Caco-2 (cell line): ENCODE measurements at regions of chr19 and their contacts with region 1.

Region 1: GRCh38 chr19:50777754-50778303 is 7.6 kb downstream of the GPR32 start:
- DNase-seq: no peak
- H3K4me3 ChIP-seq: no peak overlapping the region
- H3K4me3 Mint-ChIP-seq: no peak overlapping the region
- H3K27ac Mint-ChIP-seq: no peak overlapping the region
- H3K4me1 ChIP-seq: peaks cover 7% of the 10 kb centered on the region; the same call in 1 of the 2 replicates
- H3K4me1 Mint-ChIP-seq: no peaks in the 10 kb centered on the region
- H3K27me3 ChIP-seq: no peaks in the 10 kb centered on the region
- H3K27me3 Mint-ChIP-seq: peaks cover 30% of the 10 kb centered on the region
- CTCF ChIP-seq: no peak

Region 2: DNA sequence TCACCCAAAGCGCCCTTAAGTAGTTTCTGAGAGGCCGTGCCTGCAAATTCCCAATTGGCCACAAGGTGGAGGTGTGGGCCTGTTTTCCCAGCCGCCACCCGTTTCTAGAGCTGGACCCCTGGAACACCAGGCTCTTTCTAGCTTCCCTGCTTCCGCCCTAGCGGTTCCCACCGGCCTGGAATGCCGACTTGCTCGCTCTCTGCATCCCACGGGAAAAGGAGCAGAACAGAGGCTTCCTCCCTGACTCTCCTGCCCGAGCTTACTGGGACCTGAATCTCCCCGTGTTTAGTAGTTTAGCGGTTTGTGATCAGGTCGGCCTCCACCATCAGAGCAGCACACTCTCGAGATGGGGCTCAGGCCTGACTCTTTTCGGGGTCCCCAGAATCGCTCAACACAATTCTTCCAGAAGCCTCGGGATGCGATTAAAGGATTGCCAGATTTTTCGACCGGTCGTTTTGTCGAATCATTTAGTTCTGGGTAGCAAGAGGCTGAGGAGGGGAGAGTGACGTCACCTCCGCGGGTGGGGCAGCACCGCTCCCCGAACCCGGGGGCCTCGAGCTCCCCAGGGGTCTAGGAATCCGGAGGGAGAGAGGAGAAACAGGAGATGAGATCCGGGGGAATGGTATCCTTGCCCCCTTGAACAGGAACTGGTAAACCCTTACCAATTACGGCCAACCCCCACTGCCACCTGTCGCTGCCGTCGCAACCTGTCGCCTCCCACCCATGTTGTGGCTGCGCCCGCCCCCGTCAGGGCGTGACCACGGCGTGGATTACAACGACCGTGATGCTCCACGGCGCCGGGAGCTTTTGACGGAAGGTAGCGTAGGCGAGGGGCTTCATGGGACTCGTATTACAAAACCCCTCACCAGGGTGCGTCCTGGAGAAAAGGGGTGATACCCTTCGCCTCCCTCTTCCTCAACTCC is 420.4 kb before region 1 on chr19:
- CTCF ChIA-PET with region 1: no interaction called
- POLR2A ChIA-PET with region 1: no interaction called
- intact Hi-C with region 1: loop called (anchors 2 kb)
- DNase-seq: peak; percentile 71 to 82
- H3K4me3 ChIP-seq: peak overlapping the region; percentile 36
- H3K4me3 Mint-ChIP-seq: peak overlapping the region; percentile 68
- H3K27ac Mint-ChIP-seq: no peak overlapping the region
- H3K4me1 ChIP-seq: no peaks in the 10 kb centered on the region
- H3K4me1 Mint-ChIP-seq: no peaks in the 10 kb centered on the region
- H3K27me3 ChIP-seq: no peaks in the 10 kb centered on the region
- H3K27me3 Mint-ChIP-seq: no peaks in the 10 kb centered on the region
- CTCF ChIP-seq: peak; percentile 83 to 94

Region 3: GRCh38 chr19:50537762-50538230 is 240.0 kb before region 1 on chr19:
- CTCF ChIA-PET with region 1: no interaction called
- POLR2A ChIA-PET with region 1: no interaction called
- intact Hi-C with region 1: loop called (anchors 1 kb)
- DNase-seq: peak; percentile 88 to 89
- H3K4me3 ChIP-seq: no peak overlapping the region
- H3K4me3 Mint-ChIP-seq: no peak overlapping the region
- H3K27ac Mint-ChIP-seq: no peak overlapping the region
- H3K4me1 ChIP-seq: no peaks in the 10 kb centered on the region
- H3K4me1 Mint-ChIP-seq: no peaks in the 10 kb centered on the region
- H3K27me3 ChIP-seq: no peaks in the 10 kb centered on the region
- H3K27me3 Mint-ChIP-seq: no peaks in the 10 kb centered on the region
- CTCF ChIP-seq: peak; percentile 84 to 87

Region 4: GRCh38 chr19:50724522-50725217 is 53.2 kb before region 1 on chr19:
- CTCF ChIA-PET with region 1: no interaction called
- POLR2A ChIA-PET with region 1: no interaction called
- intact Hi-C with region 1: loop called (anchors 5 kb)
- DNase-seq: peak; percentile 95 to 97
- H3K4me3 ChIP-seq: peak overlapping the region; percentile 68
- H3K4me3 Mint-ChIP-seq: peak overlapping the region; percentile 76
- H3K27ac Mint-ChIP-seq: peak overlapping the region; percentile 61
- H3K4me1 ChIP-seq: no peaks in the 10 kb centered on the region
- H3K4me1 Mint-ChIP-seq: peaks cover 10% of the 10 kb centered on the region
- H3K27me3 ChIP-seq: no peaks in the 10 kb centered on the region
- H3K27me3 Mint-ChIP-seq: peaks cover 20% of the 10 kb centered on the region
- CTCF ChIP-seq: peak; percentile 52 to 78

Region 5: DNA sequence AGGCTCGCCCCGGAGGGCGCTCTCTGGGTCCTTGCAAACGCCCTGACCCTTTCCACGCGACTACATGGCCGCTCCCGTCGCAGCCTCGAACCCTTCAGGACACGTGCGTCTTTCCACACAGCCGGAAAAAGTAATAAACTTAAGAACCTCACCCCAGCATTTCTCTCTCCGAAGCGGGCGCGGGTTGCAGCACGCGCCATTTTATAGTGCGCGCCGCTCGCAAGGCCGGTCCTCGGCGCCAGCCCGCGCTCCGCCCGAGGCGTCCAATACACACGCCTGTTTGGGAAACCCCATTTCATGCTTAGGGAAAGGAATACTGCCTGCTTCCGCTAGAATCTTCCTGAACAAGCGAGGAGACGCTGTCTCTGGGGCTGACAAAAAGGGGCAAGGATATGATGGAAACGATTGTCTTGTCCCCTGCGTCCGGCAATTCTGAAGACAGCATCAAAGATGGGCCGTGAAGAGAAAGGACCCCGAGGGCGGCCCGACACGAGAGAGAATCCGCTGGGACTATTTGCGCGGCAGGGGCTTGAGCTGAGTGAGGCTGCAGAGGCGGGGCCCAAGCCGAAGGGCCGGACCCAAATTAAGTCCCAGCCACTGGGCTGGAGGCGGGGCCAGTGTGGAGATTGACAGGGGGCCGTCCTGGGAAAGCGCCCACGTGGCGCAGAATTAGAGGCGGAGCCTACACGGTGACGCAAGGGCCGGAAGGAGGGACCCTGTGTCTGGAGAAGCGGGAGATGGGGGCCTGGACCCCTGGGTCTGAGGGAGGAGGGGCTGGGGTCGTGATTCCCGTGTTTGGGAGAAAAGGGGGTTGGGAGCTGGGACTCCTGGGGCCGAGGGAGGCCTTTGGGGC is 26.8 kb after region 1 on chr19:
- CTCF ChIA-PET with region 1: no interaction called
- POLR2A ChIA-PET with region 1: no interaction called
- intact Hi-C with region 1: no loop called
- DNase-seq: peak; percentile 99
- H3K4me3 ChIP-seq: peak overlapping the region; percentile 62
- H3K4me3 Mint-ChIP-seq: peak overlapping the region; percentile 93
- H3K27ac Mint-ChIP-seq: peak overlapping the region; percentile 99
- H3K4me1 ChIP-seq: peaks cover 10% of the 10 kb centered on the region; the same call in 1 of the 2 replicates
- H3K4me1 Mint-ChIP-seq: peaks cover 12% of the 10 kb centered on the region
- H3K27me3 ChIP-seq: no peaks in the 10 kb centered on the region
- H3K27me3 Mint-ChIP-seq: no peaks in the 10 kb centered on the region
- CTCF ChIP-seq: no peak

Region 6: DNA sequence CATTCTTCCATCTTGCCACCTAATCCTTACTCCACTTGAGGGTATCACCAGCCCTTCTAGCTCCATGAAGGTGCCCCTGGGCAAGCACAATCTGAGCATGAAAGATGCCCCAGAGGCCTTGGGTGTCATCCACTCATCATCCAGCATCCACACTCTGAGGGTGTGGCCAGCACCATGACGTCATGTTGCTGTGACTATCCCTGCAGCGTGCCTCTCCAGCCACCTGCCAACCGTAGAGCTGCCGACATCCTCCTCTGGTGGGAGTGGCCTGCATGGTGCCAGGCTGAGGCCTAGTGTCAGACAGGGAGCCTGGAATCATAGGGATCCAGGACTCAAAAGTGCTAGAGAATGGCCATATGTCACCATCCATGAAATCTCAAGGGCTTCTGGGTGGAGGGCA is 73.8 kb after region 1 on chr19:
- CTCF ChIA-PET with region 1: no interaction called
- POLR2A ChIA-PET with region 1: no interaction called
- intact Hi-C with region 1: no loop called
- DNase-seq: peak in 1 of 2 experiments; percentile 17
- H3K4me3 ChIP-seq: no peak overlapping the region
- H3K4me3 Mint-ChIP-seq: no peak overlapping the region
- H3K27ac Mint-ChIP-seq: no peak overlapping the region
- H3K4me1 ChIP-seq: no peaks in the 10 kb centered on the region
- H3K4me1 Mint-ChIP-seq: no peaks in the 10 kb centered on the region
- H3K27me3 ChIP-seq: no peaks in the 10 kb centered on the region
- H3K27me3 Mint-ChIP-seq: peaks cover 21% of the 10 kb centered on the region
- CTCF ChIP-seq: no peak

Region 7: GRCh38 chr19:50870417-50871089 is 92.7 kb after region 1 on chr19:
- CTCF ChIA-PET with region 1: no interaction called
- POLR2A ChIA-PET with region 1: no interaction called
- intact Hi-C with region 1: no loop called
- DNase-seq: peak in 1 of 2 experiments; percentile 13
- H3K4me3 ChIP-seq: no peak overlapping the region
- H3K4me3 Mint-ChIP-seq: no peak overlapping the region
- H3K27ac Mint-ChIP-seq: no peak overlapping the region
- H3K4me1 ChIP-seq: no peaks in the 10 kb centered on the region
- H3K4me1 Mint-ChIP-seq: no peaks in the 10 kb centered on the region
- H3K27me3 ChIP-seq: no peaks in the 10 kb centered on the region; the same call in 1 of the 2 replicates
- H3K27me3 Mint-ChIP-seq: peaks cover 17% of the 10 kb centered on the region
- CTCF ChIP-seq: no peak

Region 8: DNA sequence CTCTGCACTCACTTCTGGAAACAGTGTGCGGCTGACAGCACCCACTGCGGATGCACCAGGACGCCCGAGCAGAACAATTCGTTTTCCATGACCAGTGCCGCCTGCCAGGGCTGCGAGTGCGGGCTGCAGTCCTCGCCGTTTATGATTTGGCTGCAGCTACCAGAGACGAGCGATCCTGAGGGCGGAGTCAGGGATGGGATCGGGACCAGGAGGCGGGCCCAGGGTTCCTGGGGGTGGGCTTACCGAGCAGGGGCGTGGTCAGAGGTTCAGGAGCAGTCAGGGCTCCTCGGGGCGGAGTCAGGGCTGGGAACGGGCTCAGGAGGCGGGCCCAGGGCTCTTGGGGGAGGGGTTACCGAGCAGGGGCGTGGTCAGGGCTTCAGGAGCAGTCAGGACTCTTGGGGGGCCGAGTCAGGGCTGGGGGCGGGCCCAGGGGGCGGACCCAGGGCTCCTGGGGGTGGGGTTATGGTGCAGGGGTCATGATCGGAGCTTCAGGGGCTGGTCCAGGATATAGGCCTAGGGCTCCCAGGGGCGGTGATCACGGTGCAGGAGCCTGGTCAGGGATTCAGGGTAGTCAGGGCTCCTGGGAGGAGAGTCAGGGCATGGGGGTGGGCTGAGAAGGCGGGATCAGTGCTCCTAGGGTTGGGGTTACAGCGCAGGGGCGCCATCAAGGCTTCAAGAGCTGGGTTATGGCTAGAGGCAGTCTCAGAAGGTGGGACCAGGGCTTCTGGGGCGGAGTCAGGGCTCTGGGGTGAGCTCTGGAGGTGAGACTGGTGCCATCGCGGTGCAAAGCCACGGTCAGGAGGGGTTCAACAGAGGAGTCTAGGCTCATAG is 131.6 kb after region 1 on chr19:
- CTCF ChIA-PET with region 1: no interaction called
- POLR2A ChIA-PET with region 1: no interaction called
- intact Hi-C with region 1: no loop called
- DNase-seq: peak; percentile 42 to 81
- H3K4me3 ChIP-seq: no peak overlapping the region
- H3K4me3 Mint-ChIP-seq: no peak overlapping the region
- H3K27ac Mint-ChIP-seq: no peak overlapping the region
- H3K4me1 ChIP-seq: no peaks in the 10 kb centered on the region
- H3K4me1 Mint-ChIP-seq: no peaks in the 10 kb centered on the region
- H3K27me3 ChIP-seq: no peaks in the 10 kb centered on the region
- H3K27me3 Mint-ChIP-seq: peaks cover 12% of the 10 kb centered on the region
- CTCF ChIP-seq: no peak